Gastrocnemius medialis (tissue), 4 donors: ENCODE measurements at regions of chr13 and their contacts with region 1.

Region 1: DNA sequence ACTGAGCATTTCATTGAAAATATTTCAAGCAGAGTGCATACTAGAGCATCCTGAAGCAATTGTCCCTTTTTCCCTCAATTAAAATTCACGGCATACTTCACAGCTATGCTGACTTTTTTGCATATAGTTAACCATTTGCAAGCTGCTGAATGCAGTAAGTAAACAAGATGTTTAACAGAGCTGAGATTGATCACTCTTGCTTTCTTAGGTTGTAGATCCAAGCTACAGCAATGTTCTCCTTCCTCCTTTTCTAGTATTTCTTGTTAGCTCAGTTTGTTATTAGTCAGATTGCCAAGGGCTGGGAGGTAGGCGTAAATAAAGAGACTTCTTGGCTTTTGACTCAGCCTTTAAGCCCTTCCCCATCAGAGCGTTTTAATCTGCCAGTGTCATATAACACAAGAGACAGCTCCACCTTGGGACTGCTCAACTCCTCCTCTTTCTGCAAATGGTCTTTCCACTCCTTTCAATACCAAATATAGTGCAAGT is at the start of gene SLITRK6:
- DNase-seq: no peak
- ATAC-seq: no peak
- H3K4me3 ChIP-seq: no peak within 1 kb of the TSS
- H3K27ac ChIP-seq: no peak within 1 kb of the TSS
- H3K4me1 ChIP-seq: no peaks in the 10 kb centered on the region
- H3K27me3 ChIP-seq: no peaks in the 10 kb centered on the region
- CTCF ChIP-seq: no peak
- POLR2A ChIP-seq: no peak
- total RNA-seq, gene SLITRK6: not detected

Region 2: GRCh38 chr13:85420136-85420535 is 379.0 kb before region 1 on chr13:
- in situ Hi-C with region 1: no loop called
- intact Hi-C with region 1: no loop called
- DNase-seq: no peak
- ATAC-seq: no peak
- H3K4me3 ChIP-seq: no peak overlapping the region
- H3K27ac ChIP-seq: no peak overlapping the region
- H3K4me1 ChIP-seq: no peaks in the 10 kb centered on the region
- H3K27me3 ChIP-seq: no peaks in the 10 kb centered on the region
- CTCF ChIP-seq: no peak
- POLR2A ChIP-seq: no peak

Region 3: DNA sequence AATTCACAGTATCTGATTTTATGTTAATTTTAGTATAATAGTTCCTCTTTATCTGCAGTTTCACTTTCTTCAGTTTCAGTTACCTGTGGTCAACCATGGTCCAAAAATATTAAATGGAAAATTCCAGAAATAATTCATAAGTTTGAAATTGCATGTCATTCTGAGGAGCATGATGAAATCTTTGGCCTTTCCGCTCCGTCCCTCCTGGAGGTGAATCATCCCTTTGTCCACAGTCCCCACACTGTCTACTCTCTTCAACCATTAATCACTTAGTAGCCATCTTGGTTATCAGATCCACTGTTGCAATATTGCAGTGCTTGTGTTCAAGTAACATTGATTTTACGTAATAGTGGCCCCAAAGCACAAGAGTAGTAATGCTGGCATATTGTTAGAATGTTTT is 26.8 kb before region 1 on chr13:
- in situ Hi-C with region 1: no loop called
- intact Hi-C with region 1: loop called (anchors 1 kb)
- DNase-seq: no peak
- ATAC-seq: no peak
- H3K4me3 ChIP-seq: no peak overlapping the region
- H3K27ac ChIP-seq: no peak overlapping the region
- H3K4me1 ChIP-seq: no peaks in the 10 kb centered on the region
- H3K27me3 ChIP-seq: no peaks in the 10 kb centered on the region
- CTCF ChIP-seq: no peak
- POLR2A ChIP-seq: no peak